ENCODE measurements at regions of chr5 and their contacts with region 1.

Region 1: GRCh38 chr5:40223884-40224402 is 455.8 kb upstream of the PTGER4 start:
- DNase-seq: peak; percentile 39
- H3K4me3 Mint-ChIP-seq: peak overlapping the region; percentile 66
- H3K27ac Mint-ChIP-seq: peak overlapping the region; percentile 91
- H3K4me1 Mint-ChIP-seq: peaks cover 70% of the 10 kb centered on the region
- H3K27me3 Mint-ChIP-seq: no peaks in the 10 kb centered on the region

Region 2: GRCh38 chr5:40240111-40240510 is 16.2 kb after region 1 on chr5:
- intact Hi-C with region 1: loop called (anchors 1 kb)
- DNase-seq: no peak
- H3K4me3 Mint-ChIP-seq: no peak overlapping the region
- H3K27ac Mint-ChIP-seq: no peak overlapping the region
- H3K4me1 Mint-ChIP-seq: peaks cover 22% of the 10 kb centered on the region
- H3K27me3 Mint-ChIP-seq: no peaks in the 10 kb centered on the region

Region 3: GRCh38 chr5:40333459-40334244 is 109.7 kb after region 1 on chr5:
- intact Hi-C with region 1: loop called (anchors 1 kb)
- DNase-seq: no peak
- H3K4me3 Mint-ChIP-seq: no peak overlapping the region
- H3K27ac Mint-ChIP-seq: peak overlapping the region; percentile 27
- H3K4me1 Mint-ChIP-seq: peaks cover 43% of the 10 kb centered on the region
- H3K27me3 Mint-ChIP-seq: no peaks in the 10 kb centered on the region

Region 4: DNA sequence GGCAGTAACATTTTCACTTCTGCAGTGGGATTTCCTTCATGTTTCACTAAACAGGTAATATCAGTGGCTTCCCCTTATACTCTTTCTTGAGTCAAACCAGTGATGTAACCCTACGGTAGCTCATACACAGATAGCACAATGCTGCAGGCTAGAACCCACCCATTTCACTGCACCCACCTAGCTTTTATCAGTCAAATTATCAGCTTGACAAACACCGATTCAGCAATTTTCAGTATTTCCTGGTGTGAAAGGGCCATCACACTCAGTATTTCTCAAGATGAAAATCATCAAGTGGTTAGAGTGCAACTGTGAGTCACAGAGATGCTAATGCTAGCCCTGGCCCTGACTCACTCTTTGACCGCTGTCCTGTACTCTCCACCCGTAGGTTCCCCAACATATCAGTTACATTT is 213.5 kb after region 1 on chr5:
- intact Hi-C with region 1: loop called (anchors 1 kb)
- DNase-seq: no peak
- H3K4me3 Mint-ChIP-seq: peak overlapping the region; percentile 13
- H3K27ac Mint-ChIP-seq: peak overlapping the region; percentile 71
- H3K4me1 Mint-ChIP-seq: peaks cover 84% of the 10 kb centered on the region
- H3K27me3 Mint-ChIP-seq: no peaks in the 10 kb centered on the region

Region 5: DNA sequence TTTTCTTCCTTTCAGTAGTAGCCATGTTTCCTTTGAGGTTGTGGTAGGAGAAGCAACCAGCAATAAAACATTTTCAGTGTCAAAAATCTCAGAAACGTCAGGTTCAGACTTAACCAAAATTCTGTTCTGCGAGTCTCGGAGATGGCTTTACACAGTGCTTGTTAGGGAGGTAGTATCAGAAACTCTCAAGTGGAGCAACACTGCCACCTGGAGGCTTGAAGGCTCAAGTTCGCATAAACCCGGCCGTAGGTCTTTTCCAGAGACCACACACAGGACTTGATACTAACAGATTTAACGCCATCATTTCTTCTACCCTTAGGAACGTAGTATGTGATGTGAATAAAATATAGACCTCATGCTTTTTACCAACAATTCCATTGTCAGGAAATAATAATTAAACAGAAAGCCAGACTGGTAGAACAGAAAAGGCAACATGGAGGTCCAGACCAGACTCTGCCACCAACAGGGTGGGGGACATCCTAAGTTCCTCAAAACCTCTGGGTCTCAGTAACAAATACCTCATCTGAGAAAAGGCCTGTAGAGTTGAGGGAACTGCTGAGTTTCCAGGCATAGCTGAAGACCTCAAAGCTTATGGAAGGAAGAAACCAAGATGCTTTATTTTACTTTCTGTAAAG is 464.3 kb after region 1 on chr5:
- intact Hi-C with region 1: loop called (anchors 1 kb)
- DNase-seq: peak; percentile 81
- H3K4me3 Mint-ChIP-seq: peak overlapping the region; percentile 99
- H3K27ac Mint-ChIP-seq: peak overlapping the region; percentile 91
- H3K4me1 Mint-ChIP-seq: peaks cover 71% of the 10 kb centered on the region
- H3K27me3 Mint-ChIP-seq: no peaks in the 10 kb centered on the region

Region 6: GRCh38 chr5:40834849-40835787 is 611.2 kb after region 1 on chr5 and contains the start of gene RPL37:
- intact Hi-C with region 1: loop called (anchors 5 kb)
- DNase-seq: peak; percentile 89
- H3K4me3 Mint-ChIP-seq: peak within 1 kb of the TSS; percentile 95
- H3K27ac Mint-ChIP-seq: peak within 1 kb of the TSS; percentile 90
- H3K4me1 Mint-ChIP-seq: peaks cover 45% of the 10 kb centered on the region
- H3K27me3 Mint-ChIP-seq: no peaks in the 10 kb centered on the region
- total RNA-seq, gene RPL37: 1,451 and 1,473 TPM in 2 replicates

Region 7: GRCh38 chr5:41071975-41072374 is 848.0 kb after region 1 on chr5:
- intact Hi-C with region 1: no loop called
- DNase-seq: no peak
- H3K4me3 Mint-ChIP-seq: no peak overlapping the region
- H3K27ac Mint-ChIP-seq: no peak overlapping the region
- H3K4me1 Mint-ChIP-seq: no peaks in the 10 kb centered on the region
- H3K27me3 Mint-ChIP-seq: no peaks in the 10 kb centered on the region